ENCODE measurements at regions of chr1 and their contacts with region 1.

Region 1: GRCh38 chr1:163290025-163290640 is 31.6 kb upstream of the NUF2 start:
- DNase-seq: no peak
- ATAC-seq: no peak
- H3K4me3 ChIP-seq: no peak overlapping the region
- H3K27ac ChIP-seq: no peak overlapping the region
- H3K4me1 ChIP-seq: no peaks in the 10 kb centered on the region
- H3K27me3 ChIP-seq: no peaks in the 10 kb centered on the region
- CTCF ChIP-seq: no peak
- POLR2A ChIP-seq: no peak

Region 2: GRCh38 chr1:163186862-163187261 is 103.3 kb before region 1 on chr1:
- intact Hi-C with region 1: loop called in 1 of 10 experiments (anchors 10 kb)
- DNase-seq: no peak
- ATAC-seq: no peak
- H3K4me3 ChIP-seq: no peak overlapping the region
- H3K27ac ChIP-seq: peak overlapping the region in 4 of 12 donors; percentile 19 to 76 (median 66)
- H3K4me1 ChIP-seq: peaks cover 0 to 22% (median 0%) of the 10 kb centered on the region in 12 donors
- H3K27me3 ChIP-seq: no peaks in the 10 kb centered on the region
- CTCF ChIP-seq: no peak
- POLR2A ChIP-seq: no peak

Region 3: GRCh38 chr1:163197022-163197421 is 93.1 kb before region 1 on chr1:
- intact Hi-C with region 1: no loop called
- DNase-seq: no peak
- ATAC-seq: no peak
- H3K4me3 ChIP-seq: peak overlapping the region in 7 of 12 donors; percentile 10 to 57 (median 51)
- H3K27ac ChIP-seq: peak overlapping the region in 3 of 12 donors; percentile 37 to 57 (median 48)
- H3K4me1 ChIP-seq: peaks cover 0 to 27% (median 7%) of the 10 kb centered on the region in 12 donors
- H3K27me3 ChIP-seq: no peaks in the 10 kb centered on the region
- CTCF ChIP-seq: no peak
- POLR2A ChIP-seq: no peak

Region 4: DNA sequence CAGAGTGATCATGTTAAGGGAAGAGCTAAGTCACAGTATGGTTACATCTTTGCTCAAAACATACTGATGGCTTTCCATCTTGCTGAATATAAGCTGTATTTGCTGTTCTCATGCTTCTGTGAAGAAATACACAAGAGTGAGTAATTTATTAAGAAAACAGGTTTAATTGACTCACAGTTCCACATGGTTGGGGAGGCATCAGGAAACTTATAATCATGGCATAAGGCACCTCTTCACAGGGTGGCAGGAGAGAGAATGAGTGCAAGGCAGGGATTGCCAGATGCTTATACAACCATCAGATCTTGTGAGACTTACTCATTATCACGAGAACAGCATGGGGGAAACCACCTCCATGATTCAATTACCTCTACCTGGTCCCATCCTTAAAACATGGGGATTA is 63.0 kb before region 1 on chr1:
- intact Hi-C with region 1: loop called in 1 of 10 experiments (anchors 10 kb)
- DNase-seq: no peak
- ATAC-seq: no peak
- H3K4me3 ChIP-seq: no peak overlapping the region
- H3K27ac ChIP-seq: no peak overlapping the region
- H3K4me1 ChIP-seq: peaks cover 0 to 18% (median 7%) of the 10 kb centered on the region in 12 donors
- H3K27me3 ChIP-seq: no peaks in the 10 kb centered on the region
- CTCF ChIP-seq: no peak
- POLR2A ChIP-seq: no peak

Measured in heart left ventricle (tissue), 16 donors.